MCF 10A (cell line): ENCODE measurements at regions of chr1 and their contacts with region 1.

Region 1: GRCh38 chr1:230310381-230311163 is 115.6 kb downstream of the PGBD5 start:
- DNase-seq: peak; percentile 96
- H3K4me3 Mint-ChIP-seq: no peak overlapping the region
- H3K27ac Mint-ChIP-seq: no peak overlapping the region
- H3K4me1 Mint-ChIP-seq: peaks cover 34% of the 10 kb centered on the region
- H3K27me3 Mint-ChIP-seq: peaks cover 15% of the 10 kb centered on the region
- CTCF ChIP-seq: peak; percentile 99

Region 2: DNA sequence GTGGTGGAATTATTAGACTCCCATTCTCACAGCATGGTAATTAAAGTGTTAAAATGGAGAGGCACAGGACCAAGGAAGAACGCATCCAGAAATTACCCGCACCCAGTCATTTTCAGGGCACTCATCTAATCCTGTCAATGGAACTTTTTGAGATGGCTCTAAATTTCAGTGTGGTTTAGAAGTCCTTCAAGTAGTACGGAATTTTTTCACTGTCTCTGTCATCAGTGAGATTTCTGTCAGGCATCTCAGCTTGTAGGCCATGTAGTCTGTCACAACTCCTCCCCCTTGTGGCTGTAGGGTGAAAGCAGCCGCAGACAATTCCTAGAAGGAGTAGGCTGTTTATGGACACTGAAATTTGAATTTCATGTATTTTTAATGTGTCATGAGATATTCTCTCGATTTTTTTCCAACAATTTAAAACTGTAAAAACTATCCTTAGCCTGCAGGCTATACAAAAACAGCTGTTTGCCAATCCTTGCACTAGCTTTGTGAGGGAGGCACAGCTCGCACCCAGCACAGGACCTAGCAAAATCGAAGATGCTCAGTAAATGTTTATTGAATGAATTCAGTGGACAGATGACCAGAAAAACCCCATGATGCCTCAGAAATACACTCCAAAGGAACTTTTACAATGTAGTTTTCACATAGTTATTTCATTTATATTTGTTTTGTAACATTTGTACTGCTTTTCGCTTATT is 795.8 kb before region 1 on chr1:
- CTCF ChIA-PET with region 1: interaction called, 3 read pairs
- POLR2A ChIA-PET with region 1: interaction called, 6 read pairs
- intact Hi-C with region 1: loop called (anchors 1 kb)
- DNase-seq: peak; percentile 90
- H3K4me3 Mint-ChIP-seq: no peak overlapping the region
- H3K27ac Mint-ChIP-seq: no peak overlapping the region
- H3K4me1 Mint-ChIP-seq: peaks cover 6% of the 10 kb centered on the region
- H3K27me3 Mint-ChIP-seq: no peaks in the 10 kb centered on the region
- CTCF ChIP-seq: peak; percentile 91

Region 3: DNA sequence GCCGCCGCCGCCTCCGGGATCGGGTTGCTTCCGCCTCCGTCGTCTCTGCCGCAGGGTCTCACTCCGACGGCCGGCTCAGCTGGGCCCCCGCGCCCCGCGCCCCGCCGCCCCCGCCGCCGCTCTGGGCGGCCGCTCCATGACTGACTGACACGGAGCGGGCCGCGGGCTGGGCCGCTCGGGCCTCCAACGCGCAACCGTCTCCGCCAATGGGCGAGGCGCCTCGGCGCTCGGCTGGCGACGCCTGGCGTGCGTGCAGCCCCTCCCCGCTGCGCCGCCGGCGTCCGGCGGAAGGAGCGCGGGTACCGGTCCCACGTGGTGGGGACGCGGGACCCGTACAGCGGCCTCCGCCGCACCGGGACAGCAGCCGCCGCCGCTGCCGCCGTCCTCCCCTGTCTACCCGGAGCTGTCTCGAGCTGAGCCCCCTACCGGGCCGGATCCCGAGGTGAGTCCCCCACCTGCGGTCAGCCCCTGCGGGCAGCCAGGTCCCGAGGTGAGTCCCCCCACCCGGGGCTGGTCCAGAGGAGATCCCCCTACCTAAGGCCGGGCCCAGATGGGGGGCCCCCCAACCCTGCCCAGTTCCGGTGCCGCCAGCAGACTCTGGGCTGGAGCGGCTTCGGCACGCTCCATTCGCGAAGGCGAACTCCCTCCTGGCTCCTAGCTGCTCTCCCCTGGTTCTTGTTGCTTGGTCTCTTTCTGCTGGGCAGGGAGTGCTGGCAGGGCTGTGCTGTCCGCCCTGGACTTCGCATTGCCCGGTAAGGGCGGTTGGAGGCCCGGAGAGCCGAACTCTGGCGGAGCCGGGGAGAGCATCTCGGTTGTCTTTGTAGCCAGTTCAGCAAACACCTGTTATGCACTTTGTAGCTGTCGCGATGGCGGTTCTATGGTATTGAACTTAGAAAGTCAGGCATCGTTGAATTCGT is 684.4 kb before region 1 on chr1 and contains the starts of genes TAF5L and URB2:
- CTCF ChIA-PET with region 1: interaction called, 4 read pairs
- POLR2A ChIA-PET with region 1: interaction called, 6 read pairs
- intact Hi-C with region 1: loop called (anchors 1 kb)
- DNase-seq: peak; percentile 96
- H3K4me3 Mint-ChIP-seq: peak within 1 kb of the TSS; percentile 99
- H3K27ac Mint-ChIP-seq: peak within 1 kb of the TSS; percentile 94
- H3K4me1 Mint-ChIP-seq: peaks cover 57% of the 10 kb centered on the region
- H3K27me3 Mint-ChIP-seq: no peaks in the 10 kb centered on the region
- CTCF ChIP-seq: peak; percentile 7
- total RNA-seq, gene TAF5L: 31.8 and 37.6 TPM in 2 replicates
- total RNA-seq, gene URB2: 25.8 and 35.5 TPM in 2 replicates

Region 4: DNA sequence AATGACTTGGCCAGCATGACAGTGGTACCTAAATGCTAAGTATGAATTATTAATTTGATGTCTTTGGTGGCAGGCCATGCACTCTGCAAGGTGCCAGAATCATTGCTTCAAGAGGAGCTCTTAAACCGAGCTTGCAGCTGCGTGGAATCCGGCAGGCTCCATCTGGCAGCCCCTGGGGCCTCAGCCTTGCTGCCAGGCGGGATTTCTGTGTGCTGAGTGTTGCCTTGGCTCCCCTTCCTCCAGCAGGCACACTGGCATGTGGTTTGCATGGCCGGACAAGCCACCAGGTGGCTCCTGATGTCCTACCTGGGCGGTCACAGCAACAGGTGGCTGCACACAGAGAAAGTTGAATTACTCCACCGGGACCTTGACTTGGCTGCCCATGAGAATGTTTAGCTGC is 529.1 kb before region 1 on chr1:
- CTCF ChIA-PET with region 1: no interaction called
- POLR2A ChIA-PET with region 1: no interaction called
- intact Hi-C with region 1: loop called (anchors 1 kb)
- DNase-seq: peak; percentile 35
- H3K4me3 Mint-ChIP-seq: no peak overlapping the region
- H3K27ac Mint-ChIP-seq: no peak overlapping the region
- H3K4me1 Mint-ChIP-seq: no peaks in the 10 kb centered on the region
- H3K27me3 Mint-ChIP-seq: peaks cover under 1% of the 10 kb centered on the region
- CTCF ChIP-seq: peak; percentile 3

Region 5: DNA sequence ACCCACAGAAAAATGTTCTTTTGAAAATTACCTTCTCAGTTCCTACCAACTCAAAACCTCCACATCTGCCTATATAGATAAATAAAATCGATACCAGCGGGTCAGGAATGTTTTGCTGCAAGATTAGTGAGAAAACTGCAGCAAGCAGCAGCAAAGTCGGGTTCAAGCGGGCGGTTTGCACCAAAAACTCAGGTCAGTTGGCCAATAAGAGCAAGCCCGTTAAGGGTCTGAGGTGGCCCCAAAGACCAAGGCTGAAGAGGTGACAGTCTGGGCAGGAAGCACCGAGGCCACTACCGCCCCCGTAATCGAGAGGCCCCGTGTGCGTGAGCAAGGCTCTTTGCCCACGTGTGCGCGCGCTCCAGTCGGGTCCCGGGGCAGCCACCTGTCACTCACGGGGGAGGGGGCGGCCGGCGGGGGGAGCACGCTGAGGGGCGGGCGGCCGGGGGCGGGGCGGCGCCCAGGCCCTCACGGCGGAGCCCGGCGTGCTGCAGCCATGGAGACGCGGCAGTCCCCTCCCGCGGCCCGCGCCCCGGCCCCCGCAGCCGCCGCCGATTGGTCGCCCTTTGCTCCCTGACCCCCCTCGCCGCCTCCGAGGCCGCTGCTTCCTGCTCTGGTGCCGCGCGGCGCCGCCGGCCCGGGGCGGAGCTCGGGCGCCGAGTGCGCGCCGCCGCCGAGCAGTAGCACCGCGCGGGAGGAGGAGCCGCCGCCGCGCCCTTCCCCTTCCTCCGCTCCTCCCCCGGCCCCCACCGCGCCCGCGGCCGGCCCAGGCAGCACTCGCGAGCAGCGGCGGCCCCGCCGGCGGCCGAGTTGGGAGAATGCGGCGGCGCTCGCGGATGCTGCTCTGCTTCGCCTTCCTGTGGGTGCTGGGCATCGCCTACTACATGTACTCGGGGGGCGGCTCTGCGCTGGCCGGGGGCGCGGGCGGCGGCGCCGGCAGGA is 243.8 kb before region 1 on chr1 and contains the start of gene GALNT2:
- CTCF ChIA-PET with region 1: interaction called, 3 read pairs
- POLR2A ChIA-PET with region 1: interaction called, 5 read pairs
- intact Hi-C with region 1: loop called (anchors 2 kb)
- DNase-seq: peak; percentile 94
- H3K4me3 Mint-ChIP-seq: peak within 1 kb of the TSS; percentile 91
- H3K27ac Mint-ChIP-seq: peak within 1 kb of the TSS; percentile 59
- H3K4me1 Mint-ChIP-seq: peaks cover 32% of the 10 kb centered on the region
- H3K27me3 Mint-ChIP-seq: no peaks in the 10 kb centered on the region
- CTCF ChIP-seq: no peak
- total RNA-seq, gene GALNT2: 104 and 114 TPM in 2 replicates

Region 6: DNA sequence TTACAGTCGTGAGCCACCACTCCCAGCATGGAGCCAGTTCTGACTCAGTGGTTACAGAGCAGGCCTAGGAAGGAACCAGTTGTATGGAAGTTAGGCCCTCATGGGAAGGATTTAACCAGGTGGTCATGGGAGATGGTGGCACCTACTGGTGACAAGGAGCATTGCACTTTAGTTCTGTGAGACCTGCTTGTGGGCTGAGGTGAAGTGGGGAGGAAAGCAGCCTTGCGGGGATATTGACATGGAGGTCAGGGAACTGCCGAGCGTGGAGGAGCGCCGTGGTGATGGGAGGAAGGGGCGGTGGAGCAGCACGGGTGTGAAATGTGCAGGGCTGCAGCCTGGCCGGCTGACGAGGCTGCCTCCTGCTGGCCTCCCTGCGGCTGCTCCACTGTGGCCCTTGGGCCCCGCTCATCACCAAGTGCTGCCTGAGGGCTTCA is 143.1 kb before region 1 on chr1:
- CTCF ChIA-PET with region 1: interaction called, 3 read pairs
- POLR2A ChIA-PET with region 1: no interaction called
- intact Hi-C with region 1: loop called (anchors 5 kb)
- DNase-seq: peak; percentile 77
- H3K4me3 Mint-ChIP-seq: no peak overlapping the region
- H3K27ac Mint-ChIP-seq: no peak overlapping the region
- H3K4me1 Mint-ChIP-seq: peaks cover 29% of the 10 kb centered on the region
- H3K27me3 Mint-ChIP-seq: no peaks in the 10 kb centered on the region
- CTCF ChIP-seq: peak; percentile 89

Region 7: GRCh38 chr1:230256896-230257295 is 53.7 kb before region 1 on chr1:
- CTCF ChIA-PET with region 1: no interaction called
- POLR2A ChIA-PET with region 1: no interaction called
- intact Hi-C with region 1: no loop called
- DNase-seq: no peak
- H3K4me3 Mint-ChIP-seq: no peak overlapping the region
- H3K27ac Mint-ChIP-seq: no peak overlapping the region
- H3K4me1 Mint-ChIP-seq: no peaks in the 10 kb centered on the region
- H3K27me3 Mint-ChIP-seq: no peaks in the 10 kb centered on the region
- CTCF ChIP-seq: no peak

Region 8: DNA sequence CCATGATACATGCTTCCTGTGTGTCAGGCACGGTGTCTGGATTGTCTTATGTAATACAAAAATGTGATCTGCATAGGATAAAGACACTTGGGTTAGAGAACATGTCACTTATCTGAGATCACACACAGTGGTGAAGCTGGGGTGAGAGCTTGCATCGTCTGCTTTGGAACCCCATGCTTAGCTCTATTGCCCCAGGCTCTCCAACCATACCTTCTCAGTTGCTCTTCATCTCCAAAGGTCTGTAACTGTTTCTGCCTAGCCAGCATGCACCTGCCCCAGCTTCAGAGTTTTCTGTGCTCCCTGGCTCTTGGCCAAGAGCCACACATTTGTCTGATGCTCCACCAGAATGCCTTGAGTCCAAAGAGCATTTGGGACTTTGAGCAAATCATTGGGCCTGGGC is 237.8 kb after region 1 on chr1:
- CTCF ChIA-PET with region 1: no interaction called
- POLR2A ChIA-PET with region 1: no interaction called
- intact Hi-C with region 1: no loop called
- DNase-seq: no peak
- H3K4me3 Mint-ChIP-seq: no peak overlapping the region
- H3K27ac Mint-ChIP-seq: no peak overlapping the region
- H3K4me1 Mint-ChIP-seq: no peaks in the 10 kb centered on the region
- H3K27me3 Mint-ChIP-seq: peaks cover 12% of the 10 kb centered on the region
- CTCF ChIP-seq: no peak

Region 9: DNA sequence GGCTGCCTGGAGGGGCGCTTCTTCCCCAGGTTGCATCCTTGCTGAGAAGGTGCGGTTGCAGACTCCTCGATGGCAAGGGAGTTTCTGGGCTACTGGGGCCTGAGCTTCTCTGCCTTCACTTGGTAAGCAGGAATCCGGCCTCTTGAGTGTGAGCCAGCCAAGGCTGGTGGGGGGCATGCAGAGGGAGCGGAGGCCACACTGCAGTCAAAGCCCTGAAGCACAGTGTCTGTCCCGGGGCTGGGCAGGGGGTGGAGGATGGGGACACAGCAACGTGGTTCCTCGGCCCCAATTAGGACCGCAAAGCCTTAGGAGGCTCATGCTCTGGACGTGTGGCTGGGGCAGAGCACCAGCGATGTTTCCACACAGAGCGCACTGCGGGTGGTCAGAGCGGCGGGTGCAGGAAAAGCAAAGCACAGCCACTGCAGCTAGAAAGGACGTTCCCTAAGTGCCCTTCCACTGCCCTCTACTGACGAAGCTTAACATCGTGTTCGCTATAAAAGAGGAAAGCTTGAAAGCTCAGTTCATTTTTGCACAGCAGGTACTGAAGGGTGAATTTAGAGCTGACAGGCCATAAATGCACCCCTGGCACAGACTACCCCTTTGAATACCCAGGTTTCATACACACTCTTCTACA is 271.0 kb after region 1 on chr1:
- CTCF ChIA-PET with region 1: no interaction called
- POLR2A ChIA-PET with region 1: no interaction called
- intact Hi-C with region 1: no loop called
- DNase-seq: peak; percentile 35
- H3K4me3 Mint-ChIP-seq: no peak overlapping the region
- H3K27ac Mint-ChIP-seq: no peak overlapping the region
- H3K4me1 Mint-ChIP-seq: no peaks in the 10 kb centered on the region
- H3K27me3 Mint-ChIP-seq: peaks cover 13% of the 10 kb centered on the region
- CTCF ChIP-seq: peak; percentile 7